ENCODE measurements at regions of chr18 and their contacts with region 1.

Region 1: GRCh38 chr18:29123706-29124530 is 947.0 kb upstream of the CDH2 start:
- DNase-seq: no peak
- H3K4me3 ChIP-seq: no peak overlapping the region
- H3K27ac ChIP-seq: no peak overlapping the region
- H3K4me1 ChIP-seq: no peaks in the 10 kb centered on the region
- H3K27me3 ChIP-seq: no peaks in the 10 kb centered on the region
- CTCF ChIP-seq: no peak

Region 2: DNA sequence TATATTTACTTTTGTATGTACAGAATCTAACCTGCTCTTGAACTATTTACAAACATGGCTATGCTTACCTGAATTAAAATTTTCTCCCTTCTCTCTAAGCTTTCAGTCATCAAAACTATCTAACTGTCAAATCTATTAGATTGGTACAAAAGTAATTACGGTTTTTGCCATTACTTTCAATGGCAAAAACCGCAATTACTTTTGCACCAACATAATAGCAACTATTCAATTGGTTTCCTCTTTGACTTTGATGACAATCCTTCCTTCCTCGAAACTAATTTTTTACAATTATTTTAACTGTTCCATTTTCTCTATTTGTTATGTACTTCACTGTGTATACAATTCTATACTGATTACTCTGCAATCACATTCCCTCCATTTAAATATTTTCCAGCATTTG is 72.4 kb after region 1 on chr18:
- intact Hi-C with region 1: loop called (anchors 2 kb)
- DNase-seq: no peak
- H3K4me3 ChIP-seq: no peak overlapping the region
- H3K27ac ChIP-seq: no peak overlapping the region
- H3K4me1 ChIP-seq: no peaks in the 10 kb centered on the region
- H3K27me3 ChIP-seq: no peaks in the 10 kb centered on the region
- CTCF ChIP-seq: no peak

Measured in tibial artery (tissue), 4 donors.